B cell (primary cell): ENCODE measurements at regions of chr11 and their contacts with region 1.

Region 1: DNA sequence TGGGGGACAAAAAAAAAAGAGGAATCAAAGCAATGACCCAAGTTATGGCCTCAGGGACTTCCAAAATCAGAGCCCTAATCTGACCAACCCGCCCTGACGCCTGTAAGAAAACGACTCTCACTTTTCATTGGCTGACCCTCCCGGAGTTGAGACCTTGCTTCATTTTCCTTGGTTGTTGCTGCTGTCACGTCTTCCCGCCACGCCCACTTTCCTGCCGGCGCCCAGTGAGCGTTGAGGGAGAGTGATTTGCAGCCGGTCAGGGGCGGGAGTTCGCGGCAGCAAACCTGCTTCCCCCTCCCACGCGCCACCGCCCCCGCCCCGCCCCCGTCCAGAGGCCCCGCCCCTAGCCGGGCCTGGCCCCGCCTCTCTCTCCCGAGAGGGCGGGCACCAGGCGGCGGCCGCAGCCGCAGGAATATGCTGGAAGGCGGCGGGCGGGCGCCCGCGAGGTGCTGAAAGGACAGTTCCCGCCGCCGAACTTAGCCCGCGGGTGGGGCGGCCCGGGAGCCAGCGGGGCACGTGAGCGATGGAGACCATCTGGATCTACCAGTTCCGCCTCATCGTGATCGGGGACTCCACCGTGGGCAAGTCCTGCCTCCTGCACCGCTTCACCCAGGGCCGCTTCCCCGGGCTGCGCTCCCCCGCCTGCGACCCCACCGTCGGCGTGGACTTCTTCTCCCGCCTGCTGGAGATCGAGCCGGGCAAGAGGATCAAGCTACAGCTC is at the start of gene RAB39A:
- DNase-seq: peak; percentile 94
- ATAC-seq: peak; percentile 85
- H3K4me3 ChIP-seq: peak within 1 kb of the TSS; percentile 44 to 89 (median 74)
- H3K4me3 Mint-ChIP-seq: peak within 1 kb of the TSS; percentile 88
- H3K27ac ChIP-seq: peak within 1 kb of the TSS; percentile 37 to 52
- H3K27ac Mint-ChIP-seq: peak within 1 kb of the TSS; percentile 88
- H3K4me1 ChIP-seq: peaks cover 16 to 19% of the 10 kb centered on the region in 2 donors
- H3K4me1 Mint-ChIP-seq: peaks cover 30% of the 10 kb centered on the region
- H3K27me3 ChIP-seq: peaks cover 0 to 3% (median 0%) of the 10 kb centered on the region in 4 experiments
- H3K27me3 Mint-ChIP-seq: peaks cover 5% of the 10 kb centered on the region
- CTCF ChIP-seq: no peak
- total RNA-seq, gene RAB39A: 2.4 TPM in 2 replicates

Region 2: DNA sequence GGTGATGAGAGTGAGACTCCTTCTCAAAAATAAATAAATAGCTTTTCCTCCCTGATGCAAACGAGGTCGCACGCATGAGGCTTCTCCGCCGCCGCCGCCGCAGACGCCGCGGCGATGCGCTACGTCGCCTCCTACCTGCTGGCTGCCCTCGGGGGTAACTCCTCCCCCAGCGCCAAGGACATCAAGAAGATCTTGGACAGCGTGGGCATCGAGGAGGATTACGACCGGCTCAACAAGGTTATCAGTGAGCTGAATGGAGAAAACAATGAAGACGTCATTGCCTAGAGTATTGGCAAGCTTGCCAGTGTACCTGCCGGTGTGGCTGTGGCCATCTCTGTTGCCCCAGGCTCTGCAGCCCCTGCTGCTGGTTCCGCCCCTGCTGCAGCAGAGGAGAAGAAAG is 19.9 kb before region 1 on chr11:
- CTCF ChIA-PET with region 1: no interaction called
- POLR2A ChIA-PET with region 1: interaction called, 14 read pairs
- intact Hi-C with region 1: no loop called
- DNase-seq: no peak
- ATAC-seq: no peak
- H3K4me3 ChIP-seq: no peak overlapping the region
- H3K4me3 Mint-ChIP-seq: no peak overlapping the region
- H3K27ac ChIP-seq: no peak overlapping the region
- H3K27ac Mint-ChIP-seq: no peak overlapping the region
- H3K4me1 ChIP-seq: no peaks in the 10 kb centered on the region
- H3K4me1 Mint-ChIP-seq: no peaks in the 10 kb centered on the region
- H3K27me3 ChIP-seq: peaks cover 0 to 5% (median 1%) of the 10 kb centered on the region in 4 experiments
- H3K27me3 Mint-ChIP-seq: peaks cover 22% of the 10 kb centered on the region
- CTCF ChIP-seq: no peak